ENCODE measurements at regions of chr5 and their contacts with region 1.

Region 1: GRCh38 chr5:139574641-139575312 is 13.6 kb downstream of the UBE2D2 start:
- DNase-seq: no peak
- ATAC-seq: peak; percentile 43
- H3K4me3 Mint-ChIP-seq: no peak overlapping the region
- H3K27ac Mint-ChIP-seq: peak overlapping the region; percentile 55
- H3K4me1 Mint-ChIP-seq: peaks cover 72% of the 10 kb centered on the region
- H3K27me3 Mint-ChIP-seq: no peaks in the 10 kb centered on the region

Region 2: DNA sequence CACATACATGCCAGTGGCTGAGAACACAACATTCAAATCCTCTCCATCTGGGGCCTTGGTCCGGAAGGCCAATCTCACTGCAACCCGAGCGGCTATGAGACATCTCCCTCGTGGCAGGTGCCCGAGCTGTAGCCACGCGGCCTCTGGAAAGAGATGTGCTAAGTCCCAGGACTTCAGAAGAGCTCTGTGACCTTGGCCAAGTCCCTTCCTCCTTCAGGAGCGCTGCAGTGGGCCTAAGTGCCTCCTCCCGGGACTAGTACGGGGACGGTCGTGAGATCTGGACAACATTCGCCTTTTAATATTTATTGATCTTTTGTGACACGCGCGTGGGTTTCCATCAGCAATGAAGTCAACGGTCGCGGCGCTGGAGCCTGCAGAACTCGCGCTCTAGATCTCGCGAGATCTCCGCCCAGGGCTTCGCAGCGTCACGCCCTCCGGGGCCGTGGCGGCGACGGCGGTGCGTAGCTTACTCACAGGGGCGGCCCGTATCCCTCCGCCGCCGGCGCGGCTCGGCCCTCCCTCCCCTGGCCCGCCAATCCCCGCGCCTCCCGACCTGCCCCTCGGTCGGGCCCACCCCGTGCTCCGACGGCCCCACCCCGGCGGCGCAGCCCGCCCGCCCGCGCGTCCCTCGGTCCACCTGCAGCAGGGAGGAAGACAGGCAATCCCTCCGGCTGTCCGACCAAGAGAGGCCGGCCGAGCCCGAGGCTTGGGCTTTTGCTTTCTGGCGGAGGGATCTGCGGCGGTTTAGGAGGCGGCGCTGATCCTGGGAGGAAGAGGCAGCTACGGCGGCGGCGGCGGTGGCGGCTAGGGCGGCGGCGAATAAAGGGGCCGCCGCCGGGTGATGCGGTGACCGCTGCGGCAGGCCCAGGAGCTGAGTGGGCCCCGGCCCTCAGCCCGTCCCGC is 13.8 kb before region 1 on chr5 and contains the start of gene UBE2D2:
- CTCF ChIA-PET with region 1: interaction called, 92 read pairs
- DNase-seq: peak; percentile 98
- ATAC-seq: peak; percentile 93
- H3K4me3 Mint-ChIP-seq: peak within 1 kb of the TSS; percentile 96
- H3K27ac Mint-ChIP-seq: peak within 1 kb of the TSS; percentile 94
- H3K4me1 Mint-ChIP-seq: peaks cover 36% of the 10 kb centered on the region
- H3K27me3 Mint-ChIP-seq: no peaks in the 10 kb centered on the region
- total RNA-seq, gene UBE2D2: 201 to 244 TPM

Region 3: DNA sequence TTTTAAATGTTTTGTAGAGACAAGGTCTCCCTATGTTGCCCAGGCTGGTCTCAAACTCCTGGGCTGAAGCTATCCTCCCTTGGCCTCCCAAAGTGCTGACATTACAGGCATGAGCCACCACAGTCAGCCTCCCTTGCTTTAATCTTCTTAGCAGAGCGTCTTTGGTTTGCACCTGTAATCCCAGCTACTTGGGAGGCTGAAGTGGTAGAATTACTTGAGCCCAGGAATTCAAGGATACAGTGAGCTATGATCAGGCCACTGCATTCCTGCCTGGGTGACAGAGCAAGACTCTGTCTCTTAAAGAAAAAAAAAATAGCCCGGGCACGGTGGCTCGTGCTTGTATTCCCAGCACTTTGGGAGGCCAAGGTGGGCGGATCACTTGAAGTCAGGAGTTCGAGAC is 14.2 kb after region 1 on chr5:
- CTCF ChIA-PET with region 1: interaction called, 12 read pairs
- DNase-seq: no peak
- ATAC-seq: no peak
- H3K4me3 Mint-ChIP-seq: no peak overlapping the region
- H3K27ac Mint-ChIP-seq: peak overlapping the region; percentile 36
- H3K4me1 Mint-ChIP-seq: peaks cover 39% of the 10 kb centered on the region
- H3K27me3 Mint-ChIP-seq: no peaks in the 10 kb centered on the region

Region 4: GRCh38 chr5:139702548-139702947 is 127.8 kb after region 1 on chr5:
- CTCF ChIA-PET with region 1: no interaction called
- DNase-seq: no peak
- ATAC-seq: no peak
- H3K4me3 Mint-ChIP-seq: no peak overlapping the region
- H3K27ac Mint-ChIP-seq: no peak overlapping the region
- H3K4me1 Mint-ChIP-seq: peaks cover 19% of the 10 kb centered on the region
- H3K27me3 Mint-ChIP-seq: peaks cover 25% of the 10 kb centered on the region